Breast epithelium (tissue), 4 donors: ENCODE measurements at regions of chr18 and their contacts with region 1.

Region 1: DNA sequence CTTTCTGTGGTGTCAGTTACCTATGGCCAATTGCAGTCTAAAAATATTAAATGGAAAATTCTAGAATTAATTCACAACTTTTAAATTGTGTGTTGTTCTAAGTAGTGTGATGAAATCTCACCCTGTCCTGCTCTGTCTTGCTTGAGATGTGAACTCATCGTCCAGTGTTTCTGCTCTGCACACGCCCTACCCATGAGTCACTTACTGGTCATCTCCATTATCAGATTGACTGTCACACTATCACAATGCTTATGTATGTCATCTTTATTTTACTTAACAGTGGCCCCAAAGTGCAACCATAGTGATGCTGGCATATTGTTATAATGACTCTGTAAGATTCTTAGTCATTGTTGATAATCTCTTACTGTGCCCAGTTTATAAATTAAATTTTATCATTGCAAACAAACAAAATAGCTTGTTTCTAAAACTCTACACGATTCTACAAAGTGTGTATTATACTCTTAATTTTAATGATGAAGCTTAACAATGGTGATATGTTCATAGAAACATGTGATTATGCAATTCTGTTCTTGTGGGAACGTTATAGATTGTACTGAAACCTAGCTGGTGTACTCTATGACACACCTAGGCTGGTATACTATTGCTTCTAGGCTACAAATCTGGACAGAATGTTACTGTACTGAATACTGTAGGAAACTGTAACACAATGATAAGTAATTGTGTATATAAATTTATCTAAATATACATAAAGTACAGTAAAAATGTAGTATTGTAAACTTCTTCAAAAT is 1086.8 kb upstream of the PIK3C3 start:
- DNase-seq: no peak
- H3K4me3 ChIP-seq: no peak overlapping the region
- H3K27ac ChIP-seq: no peak overlapping the region
- H3K4me1 ChIP-seq: no peaks in the 10 kb centered on the region
- H3K27me3 ChIP-seq: no peaks in the 10 kb centered on the region
- CTCF ChIP-seq: no peak
- POLR2A ChIP-seq: no peak

Region 2: GRCh38 chr18:38933910-38934510 is 1934.3 kb before region 1 on chr18:
- intact Hi-C with region 1: loop called (anchors 5 kb)
- DNase-seq: no peak
- H3K4me3 ChIP-seq: no peak overlapping the region
- H3K27ac ChIP-seq: no peak overlapping the region
- H3K4me1 ChIP-seq: no peaks in the 10 kb centered on the region
- H3K27me3 ChIP-seq: no peaks in the 10 kb centered on the region
- CTCF ChIP-seq: no peak
- POLR2A ChIP-seq: no peak

Region 3: DNA sequence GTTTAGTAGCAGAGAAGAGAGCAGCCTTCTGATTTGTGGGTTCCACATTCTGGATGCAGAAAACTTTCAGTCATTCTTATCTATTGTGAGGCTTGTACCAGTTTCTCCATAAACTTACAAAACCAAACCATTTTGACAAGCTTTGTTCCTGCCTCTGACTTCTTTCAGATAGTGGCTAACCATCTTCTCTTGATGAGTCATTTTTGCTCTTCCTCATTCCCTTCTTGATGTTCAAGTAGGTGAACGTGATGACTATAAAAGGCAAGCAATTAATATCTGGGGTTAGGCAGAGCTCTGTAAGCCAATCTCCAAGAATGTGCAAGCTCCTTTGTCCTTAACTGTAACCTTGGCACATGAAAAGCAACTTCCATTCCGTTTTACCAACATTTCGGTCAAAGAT is 996.3 kb before region 1 on chr18:
- intact Hi-C with region 1: no loop called
- DNase-seq: no peak
- H3K4me3 ChIP-seq: no peak overlapping the region
- H3K27ac ChIP-seq: no peak overlapping the region
- H3K4me1 ChIP-seq: no peaks in the 10 kb centered on the region
- H3K27me3 ChIP-seq: no peaks in the 10 kb centered on the region
- CTCF ChIP-seq: no peak
- POLR2A ChIP-seq: no peak

Region 4: GRCh38 chr18:40904295-40904694 is 36.0 kb after region 1 on chr18:
- intact Hi-C with region 1: no loop called
- DNase-seq: no peak
- H3K4me3 ChIP-seq: no peak overlapping the region
- H3K27ac ChIP-seq: no peak overlapping the region
- H3K4me1 ChIP-seq: no peaks in the 10 kb centered on the region
- H3K27me3 ChIP-seq: no peaks in the 10 kb centered on the region
- CTCF ChIP-seq: no peak
- POLR2A ChIP-seq: no peak